GM13977 (cell line): ENCODE measurements at regions of chr17 and their contacts with region 1.

Region 1: DNA sequence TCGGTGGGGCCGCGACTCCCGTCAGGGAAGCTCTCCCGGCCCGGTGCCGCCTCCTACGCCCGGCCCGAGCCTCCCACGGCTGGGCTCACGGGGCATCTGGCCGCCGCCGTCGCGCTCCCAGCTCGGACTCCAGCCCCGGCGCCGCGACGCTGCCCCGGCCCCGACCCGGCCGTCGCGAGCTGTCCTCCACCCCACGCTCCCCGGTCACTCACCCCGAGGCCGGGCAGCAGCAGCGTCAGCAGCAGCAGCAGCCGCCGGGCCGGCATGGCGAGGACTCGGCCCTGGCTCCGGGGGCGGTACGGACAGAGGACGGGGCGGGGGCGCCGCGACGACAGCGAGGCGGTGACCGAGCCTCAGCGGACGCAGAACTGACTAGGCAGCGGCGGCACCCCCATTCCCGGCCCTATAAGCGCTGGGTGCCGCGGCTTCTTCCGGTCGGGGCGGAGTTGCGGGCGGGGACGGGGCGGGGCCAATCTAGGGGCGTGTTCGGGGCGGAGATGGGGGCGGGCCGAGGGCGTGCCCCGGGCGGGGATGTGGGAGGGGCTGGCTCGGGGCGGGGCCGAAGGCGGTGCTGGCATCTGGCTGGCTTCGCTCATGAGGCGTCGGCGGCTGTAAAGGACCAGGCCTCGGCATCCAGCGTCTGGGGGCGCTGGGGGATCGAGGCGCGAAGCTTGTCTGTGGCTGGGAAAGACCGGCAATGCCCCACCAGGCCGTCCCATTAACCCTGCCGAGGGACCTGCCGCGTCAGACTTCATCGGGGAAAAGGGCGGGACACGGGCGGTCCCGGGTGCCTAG is at the start of gene ERN1:
- DNase-seq: peak; percentile 96
- CTCF ChIP-seq: no peak

Region 2: DNA sequence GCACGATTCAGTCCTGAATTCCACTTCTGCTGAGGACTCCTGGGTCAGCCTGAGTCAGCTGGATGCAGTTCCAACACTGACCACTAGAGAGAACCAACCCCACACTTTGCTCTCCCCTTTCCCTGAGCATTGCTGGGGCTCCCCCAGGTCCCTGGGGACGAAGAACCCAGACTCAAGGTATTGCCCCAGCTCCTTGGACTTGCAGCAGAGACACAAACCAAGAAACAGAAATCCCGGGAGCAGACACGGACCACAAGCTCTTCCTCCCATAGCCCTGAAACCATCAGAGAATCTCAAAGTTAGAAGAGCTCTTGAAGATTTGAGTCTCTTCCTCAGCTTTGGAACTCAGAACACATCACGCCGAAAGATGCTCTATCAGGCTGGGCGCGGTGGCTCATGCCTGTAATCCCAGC is 210.6 kb before region 1 on chr17:
- in situ Hi-C with region 1: loop called (anchors 10 kb)
- DNase-seq: peak; percentile 81
- CTCF ChIP-seq: peak; percentile 96

Region 3: DNA sequence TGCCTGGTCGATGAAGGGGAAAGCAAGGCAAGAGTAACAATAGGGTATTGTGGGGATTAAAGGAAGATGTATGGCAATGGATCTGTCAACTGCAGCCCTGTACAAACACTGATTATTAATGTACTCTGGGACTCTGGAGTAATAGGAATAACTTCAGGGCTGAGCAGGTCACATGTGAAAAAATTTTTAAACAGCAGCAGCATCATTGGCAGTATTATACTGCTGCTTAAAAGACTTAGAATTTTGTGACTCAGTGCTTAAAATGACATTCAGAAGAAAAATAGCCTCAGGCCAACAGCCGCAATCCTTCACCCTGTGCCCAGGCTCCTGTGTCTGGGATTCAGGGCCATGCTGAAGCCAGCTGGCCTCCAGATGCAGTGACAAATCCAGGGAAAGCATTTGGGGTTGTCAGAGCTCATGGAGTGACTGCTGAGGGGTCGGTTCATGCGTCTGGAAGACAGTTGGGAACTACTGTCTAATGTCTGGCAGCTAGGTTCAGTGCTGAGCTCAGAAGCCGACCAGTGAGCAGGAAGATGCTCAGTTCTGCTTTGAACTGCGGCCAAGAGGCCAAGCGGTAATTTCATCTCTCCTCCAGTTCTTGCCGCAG is 110.9 kb after region 1 on chr17:
- in situ Hi-C with region 1: no loop called
- DNase-seq: no peak
- CTCF ChIP-seq: no peak